Endothelial cell of umbilical vein (primary cell): ENCODE measurements at regions of chr1 and their contacts with region 1.

Region 1: DNA sequence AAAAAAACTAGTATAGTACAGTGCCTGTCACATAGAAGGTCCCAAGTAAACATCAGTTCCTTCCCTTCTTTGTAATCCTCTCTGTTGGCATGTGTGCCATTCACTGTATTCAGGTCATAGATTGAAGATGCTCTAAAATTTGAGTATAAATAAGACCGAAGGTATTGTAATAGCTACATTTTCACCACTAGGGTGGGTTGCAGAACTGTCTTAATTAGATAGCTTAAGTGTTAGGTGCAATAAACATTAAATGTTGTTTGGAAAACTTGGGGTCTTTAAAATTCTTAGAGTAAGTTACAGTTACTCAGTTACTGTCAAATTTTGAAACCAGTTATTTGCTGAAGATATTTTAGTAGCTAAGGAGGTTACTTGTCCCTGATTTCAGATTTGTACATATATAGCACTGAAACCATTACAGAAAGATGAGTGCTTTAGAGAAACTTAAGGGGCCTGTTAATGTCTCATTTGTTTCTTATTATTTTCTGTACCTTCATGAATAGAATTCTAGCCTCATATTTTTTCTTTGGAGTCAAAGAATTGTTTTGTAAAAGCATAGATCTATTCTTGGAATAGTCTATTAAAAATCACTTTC is 24.3 kb downstream of the PER3 start:
- DNase-seq: peak; percentile 49
- H3K4me3 ChIP-seq: no peak overlapping the region
- H3K27ac ChIP-seq: no peak overlapping the region
- H3K4me1 ChIP-seq: no peaks in the 10 kb centered on the region
- H3K27me3 ChIP-seq: no peaks in the 10 kb centered on the region
- CTCF ChIP-seq: peak; percentile 29 to 30
- POLR2A ChIP-seq: no peak

Region 2: GRCh38 chr1:7656557-7657215 is 151.7 kb before region 1 on chr1:
- CTCF ChIA-PET with region 1: no interaction called
- POLR2A ChIA-PET with region 1: no interaction called
- dilution Hi-C with region 1: no loop called
- intact Hi-C with region 1: no loop called
- DNase-seq: no peak
- H3K4me3 ChIP-seq: no peak overlapping the region
- H3K27ac ChIP-seq: no peak overlapping the region
- H3K4me1 ChIP-seq: no peaks in the 10 kb centered on the region
- H3K27me3 ChIP-seq: no peaks in the 10 kb centered on the region
- CTCF ChIP-seq: no peak
- POLR2A ChIP-seq: no peak

Region 3: GRCh38 chr1:7783826-7784491 is 24.4 kb before region 1 on chr1 and contains the start of gene PER3:
- CTCF ChIA-PET with region 1: interaction called, 7 read pairs
- POLR2A ChIA-PET with region 1: no interaction called
- dilution Hi-C with region 1: no loop called
- intact Hi-C with region 1: loop called (anchors 1 kb)
- DNase-seq: peak; percentile 98
- H3K4me3 ChIP-seq: peak within 1 kb of the TSS; percentile 37 to 65 (median 60)
- H3K27ac ChIP-seq: peak within 1 kb of the TSS; percentile 35
- H3K4me1 ChIP-seq: peaks cover 6% of the 10 kb centered on the region
- H3K27me3 ChIP-seq: no peaks in the 10 kb centered on the region
- CTCF ChIP-seq: no peak
- POLR2A ChIP-seq: no peak
- total RNA-seq, gene PER3: 2.6 and 3.6 TPM in 2 replicates

Region 4: GRCh38 chr1:7795406-7795805 is 12.9 kb before region 1 on chr1:
- CTCF ChIA-PET with region 1: interaction called, 11 read pairs
- POLR2A ChIA-PET with region 1: no interaction called
- dilution Hi-C with region 1: no loop called
- intact Hi-C with region 1: no loop called
- DNase-seq: no peak
- H3K4me3 ChIP-seq: no peak overlapping the region
- H3K27ac ChIP-seq: no peak overlapping the region
- H3K4me1 ChIP-seq: no peaks in the 10 kb centered on the region
- H3K27me3 ChIP-seq: no peaks in the 10 kb centered on the region
- CTCF ChIP-seq: no peak
- POLR2A ChIP-seq: no peak

Region 5: DNA sequence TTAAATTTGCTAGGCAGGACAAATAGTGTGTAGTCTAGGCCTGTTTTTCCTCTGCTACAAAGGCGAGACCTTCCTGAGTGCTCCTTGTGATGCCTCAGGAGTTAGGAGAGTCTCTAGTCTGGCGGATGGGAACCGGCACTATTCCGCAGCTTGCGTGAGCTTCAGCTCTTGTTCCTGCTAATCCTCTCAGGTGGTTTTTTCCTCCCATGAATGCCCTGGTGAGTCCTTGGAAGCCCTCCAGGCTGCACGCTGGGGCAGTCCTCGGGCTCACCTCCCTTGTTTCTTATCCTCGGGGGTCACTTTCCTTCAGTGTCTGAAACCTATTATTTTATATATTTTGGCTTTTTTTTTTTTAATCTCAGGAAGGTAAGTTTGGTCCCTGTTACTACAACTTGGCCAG is 16.4 kb after region 1 on chr1:
- CTCF ChIA-PET with region 1: interaction called, 29 read pairs
- POLR2A ChIA-PET with region 1: no interaction called
- dilution Hi-C with region 1: no loop called
- intact Hi-C with region 1: no loop called
- DNase-seq: no peak
- H3K4me3 ChIP-seq: no peak overlapping the region
- H3K27ac ChIP-seq: no peak overlapping the region
- H3K4me1 ChIP-seq: no peaks in the 10 kb centered on the region
- H3K27me3 ChIP-seq: no peaks in the 10 kb centered on the region
- CTCF ChIP-seq: no peak
- POLR2A ChIP-seq: no peak

Region 6: DNA sequence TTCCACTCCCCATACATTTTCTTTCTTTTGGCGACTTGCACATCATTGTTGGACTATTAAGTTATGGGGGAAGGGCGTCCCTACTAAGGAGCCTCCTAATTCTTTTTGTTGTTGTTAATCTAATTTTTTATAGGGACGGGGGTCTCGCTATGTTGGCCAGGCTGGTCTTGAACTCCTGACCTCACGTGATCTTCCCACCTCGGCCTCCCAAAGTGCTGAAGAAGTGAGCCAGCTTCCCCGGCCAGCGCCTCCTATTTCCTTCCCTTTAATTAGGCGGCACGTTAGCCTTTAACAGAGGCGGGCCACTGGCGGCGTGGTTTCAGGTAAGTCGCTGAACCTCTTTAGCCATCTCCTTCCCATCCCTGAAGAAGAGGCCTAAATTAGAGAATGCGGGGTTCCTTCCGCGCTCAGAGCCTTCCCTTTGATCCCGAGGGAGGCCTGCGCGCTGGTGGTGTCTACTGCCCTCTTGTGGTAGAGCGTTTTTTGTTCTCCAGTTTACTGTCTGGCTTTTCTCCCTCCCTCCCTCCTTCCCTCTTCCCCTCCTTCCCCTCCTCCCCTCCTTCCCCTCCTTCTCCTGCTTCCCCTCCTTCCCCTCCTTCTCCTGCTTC is 94.2 kb after region 1 on chr1:
- CTCF ChIA-PET with region 1: interaction called, 69 read pairs
- POLR2A ChIA-PET with region 1: no interaction called
- dilution Hi-C with region 1: no loop called
- intact Hi-C with region 1: loop called (anchors 1 kb)
- DNase-seq: peak; percentile 58
- H3K4me3 ChIP-seq: no peak overlapping the region
- H3K27ac ChIP-seq: no peak overlapping the region
- H3K4me1 ChIP-seq: no peaks in the 10 kb centered on the region
- H3K27me3 ChIP-seq: peaks cover 0 to 3% of the 10 kb centered on the region in 2 experiments
- CTCF ChIP-seq: peak; percentile 59 to 80
- POLR2A ChIP-seq: no peak

Region 7: GRCh38 chr1:7942214-7942921 is 134.0 kb after region 1 on chr1:
- CTCF ChIA-PET with region 1: interaction called, 7 read pairs
- POLR2A ChIA-PET with region 1: no interaction called
- dilution Hi-C with region 1: no loop called
- intact Hi-C with region 1: loop called (anchors 5 kb)
- DNase-seq: peak; percentile 48
- H3K4me3 ChIP-seq: no peak overlapping the region
- H3K27ac ChIP-seq: no peak overlapping the region
- H3K4me1 ChIP-seq: peaks cover 5% of the 10 kb centered on the region
- H3K27me3 ChIP-seq: peaks cover 27 to 49% of the 10 kb centered on the region in 2 experiments
- CTCF ChIP-seq: peak in 1 of 2 donors; percentile 59
- POLR2A ChIP-seq: no peak

Region 8: DNA sequence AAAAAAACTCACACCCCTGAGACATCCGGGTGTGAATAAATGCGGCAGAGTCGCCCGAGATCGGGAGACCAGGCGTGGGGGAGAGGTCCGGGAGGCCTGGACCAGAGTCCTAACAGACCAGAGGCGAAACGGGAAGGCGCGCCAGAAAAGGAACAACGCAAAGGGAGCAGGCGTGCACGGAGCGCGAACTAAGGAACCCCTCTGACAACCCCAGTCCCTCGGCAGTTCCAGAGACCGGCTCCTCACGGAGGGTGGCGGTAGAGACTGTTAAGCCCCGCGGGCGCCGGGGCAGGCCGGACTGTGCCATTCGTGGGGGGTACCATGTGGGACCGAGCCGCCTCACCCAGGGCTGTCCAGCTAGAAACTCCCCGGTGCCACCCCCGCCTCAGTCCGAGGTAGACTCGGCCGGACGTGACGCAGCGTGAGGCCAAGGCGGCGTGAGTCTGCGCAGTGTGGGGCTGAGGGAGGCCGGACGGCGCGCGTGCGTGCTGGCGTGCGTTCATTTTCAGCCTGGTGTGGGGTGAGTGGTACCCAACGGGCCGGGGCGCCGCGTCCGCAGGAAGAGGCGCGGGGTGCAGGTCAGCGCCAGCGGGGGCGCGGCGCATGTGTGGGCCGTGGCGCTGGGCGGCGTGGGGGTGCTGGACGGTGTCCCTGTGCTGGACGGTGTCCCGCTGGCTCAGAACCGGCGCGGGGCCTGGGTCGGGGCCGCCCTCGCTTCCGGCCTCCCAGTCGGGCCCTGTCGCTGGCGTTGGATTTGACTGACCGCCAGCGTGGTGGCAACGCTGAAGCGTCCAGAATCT is 153.1 kb after region 1 on chr1 and contains the start of gene PARK7:
- CTCF ChIA-PET with region 1: no interaction called
- POLR2A ChIA-PET with region 1: no interaction called
- dilution Hi-C with region 1: no loop called
- intact Hi-C with region 1: no loop called
- DNase-seq: peak; percentile 100
- H3K4me3 ChIP-seq: peak within 1 kb of the TSS; percentile 60 to 91 (median 81)
- H3K27ac ChIP-seq: peak within 1 kb of the TSS; percentile 82
- H3K4me1 ChIP-seq: peaks cover 14% of the 10 kb centered on the region
- H3K27me3 ChIP-seq: no peaks in the 10 kb centered on the region
- CTCF ChIP-seq: peak; percentile 22 to 64
- POLR2A ChIP-seq: peak; percentile 99
- total RNA-seq, gene PARK7: 289 and 294 TPM in 2 replicates